ENCODE measurements at regions of chr3 and their contacts with region 1.

Region 1: GRCh38 chr3:119034256-119035013 is at the start of gene IGSF11:
- DNase-seq: peak; percentile 75 to 82
- ATAC-seq: peak; percentile 93 to 97
- H3K4me3 ChIP-seq: peak within 1 kb of the TSS; percentile 73
- H3K27ac ChIP-seq: peak within 1 kb of the TSS; percentile 65 to 73
- H3K4me1 ChIP-seq: peaks cover 12% of the 10 kb centered on the region; the same call in 1 of the 3 replicates
- CTCF ChIP-seq: peak; percentile 83
- EP300 ChIP-seq: no peak
- POLR2A ChIP-seq: peak; percentile 56
- RAD21 ChIP-seq: peak; percentile 29 to 79; a peak in 4 of 5 replicates
- polyA plus RNA-seq, gene IGSF11: 21.7 and 22.2 TPM in 2 replicates

Region 2: GRCh38 chr3:119084371-119085072 is 50.1 kb after region 1 on chr3:
- CTCF ChIA-PET with region 1: interaction called, 10 read pairs
- POLR2A ChIA-PET with region 1: no interaction called
- DNase-seq: peak; percentile 32 to 70
- ATAC-seq: peak; percentile 91 to 97
- H3K4me3 ChIP-seq: no peak overlapping the region
- H3K27ac ChIP-seq: peak overlapping the region; percentile 3 to 44; a peak in 4 of 6 replicates
- H3K4me1 ChIP-seq: peaks cover 29% of the 10 kb centered on the region
- CTCF ChIP-seq: no peak
- EP300 ChIP-seq: no peak
- POLR2A ChIP-seq: no peak
- RAD21 ChIP-seq: no peak

Region 3: GRCh38 chr3:119091926-119092670 is 57.7 kb after region 1 on chr3:
- CTCF ChIA-PET with region 1: interaction called, 16 read pairs
- POLR2A ChIA-PET with region 1: no interaction called
- DNase-seq: no peak
- ATAC-seq: no peak
- H3K4me3 ChIP-seq: no peak overlapping the region
- H3K27ac ChIP-seq: no peak overlapping the region
- H3K4me1 ChIP-seq: no peaks in the 10 kb centered on the region
- CTCF ChIP-seq: no peak
- EP300 ChIP-seq: no peak
- POLR2A ChIP-seq: no peak
- RAD21 ChIP-seq: no peak

Region 4: GRCh38 chr3:119388577-119388976 is 354.1 kb after region 1 on chr3:
- CTCF ChIA-PET with region 1: no interaction called
- POLR2A ChIA-PET with region 1: no interaction called
- DNase-seq: no peak
- ATAC-seq: peak in 1 of 2 experiments; percentile 40; a peak in 1 of 6 replicates
- H3K4me3 ChIP-seq: no peak overlapping the region
- H3K27ac ChIP-seq: no peak overlapping the region
- H3K4me1 ChIP-seq: no peaks in the 10 kb centered on the region
- CTCF ChIP-seq: no peak
- EP300 ChIP-seq: no peak
- POLR2A ChIP-seq: no peak
- RAD21 ChIP-seq: peak in 1 of 2 experiments; percentile 39; a peak in 2 of 5 replicates

Measured in A549 (cell line).